ENCODE measurements at regions of chr1 and their contacts with region 1.

Region 1: GRCh38 chr1:15617175-15617880 is at the start of gene DDI2:
- DNase-seq: peak; percentile 94
- ATAC-seq: peak; percentile 94
- H3K4me3 Mint-ChIP-seq: peak within 1 kb of the TSS; percentile 93
- H3K27ac Mint-ChIP-seq: peak within 1 kb of the TSS; percentile 85
- H3K4me1 Mint-ChIP-seq: peaks cover 36% of the 10 kb centered on the region
- H3K27me3 Mint-ChIP-seq: no peaks in the 10 kb centered on the region
- total RNA-seq, gene DDI2: 28.8 to 31.1 TPM

Region 2: GRCh38 chr1:15578921-15579682 is 38.2 kb before region 1 on chr1:
- CTCF ChIA-PET with region 1: interaction called, 3 read pairs
- POLR2A ChIA-PET with region 1: interaction called, 16 read pairs
- DNase-seq: peak; percentile 58
- ATAC-seq: peak; percentile 74
- H3K4me3 Mint-ChIP-seq: peak overlapping the region; percentile 23
- H3K27ac Mint-ChIP-seq: peak overlapping the region; percentile 95
- H3K4me1 Mint-ChIP-seq: peaks cover 50% of the 10 kb centered on the region
- H3K27me3 Mint-ChIP-seq: no peaks in the 10 kb centered on the region

Region 3: GRCh38 chr1:15603050-15603965 is 14.0 kb before region 1 on chr1:
- CTCF ChIA-PET with region 1: interaction called, 15 read pairs
- POLR2A ChIA-PET with region 1: interaction called, 7 read pairs
- DNase-seq: peak; percentile 96
- ATAC-seq: peak; percentile 98
- H3K4me3 Mint-ChIP-seq: peak overlapping the region; percentile 60
- H3K27ac Mint-ChIP-seq: peak overlapping the region; percentile 22
- H3K4me1 Mint-ChIP-seq: peaks cover 11% of the 10 kb centered on the region
- H3K27me3 Mint-ChIP-seq: no peaks in the 10 kb centered on the region

Region 4: DNA sequence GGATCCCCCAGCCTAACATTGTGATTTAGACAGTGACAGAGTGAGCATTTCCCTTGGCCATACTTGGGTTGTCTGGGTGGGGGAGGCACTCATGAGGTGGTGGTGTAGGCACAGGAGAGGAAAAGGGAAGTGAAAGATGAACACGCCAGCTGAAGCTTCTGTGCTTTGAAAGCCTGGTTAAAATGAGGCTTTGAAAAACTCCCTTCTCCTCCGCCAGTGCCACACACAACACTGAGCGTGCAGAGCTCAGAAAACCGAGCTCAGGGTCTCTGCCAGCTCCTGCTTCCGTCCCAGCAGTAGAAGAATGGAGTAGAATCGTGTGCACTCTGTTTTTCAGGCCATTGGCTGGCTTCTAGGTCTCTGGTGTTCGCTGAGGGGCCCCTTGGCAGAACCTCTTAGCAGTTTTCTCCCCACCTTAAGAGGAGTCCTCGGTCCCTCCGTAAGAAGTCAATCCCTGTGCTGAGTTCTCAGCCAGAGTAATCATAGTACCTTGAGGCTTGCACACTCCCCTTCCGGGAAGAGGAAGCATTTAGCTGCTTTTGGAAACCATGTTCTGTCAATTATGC is 79.7 kb after region 1 on chr1:
- CTCF ChIA-PET with region 1: interaction called, 10 read pairs
- POLR2A ChIA-PET with region 1: interaction called, 6 read pairs
- DNase-seq: peak; percentile 61
- ATAC-seq: peak; percentile 85
- H3K4me3 Mint-ChIP-seq: peak overlapping the region; percentile 78
- H3K27ac Mint-ChIP-seq: peak overlapping the region; percentile 97
- H3K4me1 Mint-ChIP-seq: peaks cover 36% of the 10 kb centered on the region
- H3K27me3 Mint-ChIP-seq: no peaks in the 10 kb centered on the region